ENCODE measurements at regions of chr4 and their contacts with region 1.

Region 1: DNA sequence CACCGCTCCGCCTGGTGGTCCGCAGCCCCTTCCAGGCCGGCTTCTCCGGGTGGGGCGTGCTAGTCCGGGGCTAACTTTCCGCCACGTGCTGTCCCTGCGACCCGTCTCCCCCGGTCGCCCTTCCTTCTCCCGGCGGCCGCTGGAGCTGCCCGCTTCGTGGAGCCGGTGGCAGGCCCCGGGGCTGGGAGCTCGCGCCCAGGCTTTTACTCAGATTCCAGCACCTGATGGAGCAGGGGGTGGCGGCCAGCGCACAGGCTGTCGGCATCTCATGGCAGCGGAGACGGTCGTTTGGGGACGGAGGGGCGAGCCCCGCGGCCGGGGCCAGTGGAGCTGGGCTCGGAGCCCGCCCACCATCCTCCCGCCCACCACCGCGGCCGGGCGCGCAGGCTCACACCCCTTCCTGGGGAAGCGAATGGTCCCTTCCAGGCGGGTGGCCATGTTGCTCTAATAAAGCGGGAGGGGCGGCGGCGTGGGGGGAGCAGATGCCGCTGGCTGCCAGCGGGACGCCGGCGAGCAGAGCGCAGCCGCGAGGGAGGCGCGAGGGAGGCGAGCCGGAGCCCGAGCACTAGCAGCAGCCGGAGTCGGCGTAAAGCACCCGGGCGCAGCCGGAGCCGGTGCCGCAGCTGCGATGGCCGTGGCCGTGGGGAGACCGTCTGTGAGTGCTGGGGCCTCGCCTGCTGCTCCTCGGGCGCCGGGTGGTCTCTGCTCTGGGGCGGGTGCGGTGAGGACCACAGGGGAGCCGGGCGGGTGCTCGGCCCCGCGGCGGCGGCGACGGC is at the start of gene SEPTIN11:
- DNase-seq: peak; percentile 87
- H3K4me3 ChIP-seq: peak within 1 kb of the TSS; percentile 73
- H3K27ac ChIP-seq: no peak within 1 kb of the TSS
- H3K4me1 ChIP-seq: peaks cover 8% of the 10 kb centered on the region
- CTCF ChIP-seq: no peak
- total RNA-seq, gene SEPTIN11: 16.5 and 23.5 TPM in 2 replicates

Region 2: DNA sequence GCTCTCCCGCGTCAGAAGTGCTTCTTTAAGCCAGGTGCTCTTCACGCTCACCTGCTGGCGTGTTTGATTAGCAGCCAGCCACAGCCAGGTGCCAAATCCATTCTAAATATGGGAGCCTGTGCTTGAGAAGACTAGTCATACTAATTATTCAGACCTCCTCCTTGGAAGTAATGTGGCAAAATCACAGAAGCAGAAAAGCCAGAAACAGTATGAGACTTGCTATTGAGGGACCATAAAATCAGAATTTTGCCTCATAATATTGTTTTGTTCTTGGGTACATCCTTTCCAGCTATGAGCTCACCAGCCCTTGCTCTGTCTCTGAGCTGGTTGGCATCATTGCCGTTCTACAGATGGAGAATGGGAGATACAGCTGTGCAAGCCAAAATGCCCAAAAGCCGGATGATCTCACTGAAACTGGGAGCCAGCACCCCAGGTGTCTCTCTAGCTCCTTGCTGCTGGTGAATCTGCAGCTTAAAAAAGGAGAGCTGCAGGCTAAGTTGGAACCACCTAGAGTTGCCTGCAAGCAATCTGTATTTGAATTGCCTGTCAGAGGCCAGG is 309.0 kb before region 1 on chr4:
- CTCF ChIA-PET with region 1: no interaction called
- POLR2A ChIA-PET with region 1: no interaction called
- intact Hi-C with region 1: no loop called
- DNase-seq: no peak
- H3K4me3 ChIP-seq: no peak overlapping the region
- H3K27ac ChIP-seq: no peak overlapping the region
- H3K4me1 ChIP-seq: no peaks in the 10 kb centered on the region
- CTCF ChIP-seq: no peak

Region 3: DNA sequence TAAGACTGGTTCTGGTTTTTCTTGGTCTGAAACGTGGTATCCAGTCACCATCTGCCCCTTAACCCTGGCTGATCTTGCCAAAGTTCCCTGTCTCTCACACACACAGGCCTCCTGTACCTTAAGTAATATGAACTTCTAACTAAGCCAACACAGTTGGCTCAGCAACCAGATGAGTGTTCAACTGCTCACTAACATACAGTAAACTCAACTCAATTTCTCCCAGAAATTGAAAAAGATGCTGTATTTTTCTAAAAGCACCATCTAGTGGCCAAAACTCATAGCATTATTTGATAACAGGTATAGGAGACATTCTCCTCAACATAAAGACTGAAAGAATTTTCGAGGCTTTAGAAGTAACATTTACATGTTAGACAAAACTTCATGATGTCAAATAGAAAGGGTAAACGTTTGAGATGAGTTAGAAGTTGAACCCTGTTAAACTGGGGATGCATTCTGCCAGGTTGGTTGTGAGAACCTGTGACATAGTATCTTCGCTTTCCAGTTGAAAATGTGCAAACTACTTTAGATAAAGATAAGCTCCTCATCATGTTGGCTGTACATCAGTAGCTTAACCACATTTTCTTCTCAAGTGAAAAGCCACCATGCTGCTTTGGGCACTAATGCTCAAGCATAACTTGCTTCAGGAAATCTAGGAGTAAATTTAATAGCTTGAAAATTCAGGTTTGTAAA is 95.1 kb after region 1 on chr4:
- CTCF ChIA-PET with region 1: no interaction called
- POLR2A ChIA-PET with region 1: interaction called, 4 read pairs
- intact Hi-C with region 1: loop called (anchors 2 kb)
- DNase-seq: peak; percentile 62
- H3K4me3 ChIP-seq: no peak overlapping the region
- H3K27ac ChIP-seq: no peak overlapping the region
- H3K4me1 ChIP-seq: peaks cover 8% of the 10 kb centered on the region
- CTCF ChIP-seq: peak; percentile 95